PC-3 (cell line): ENCODE measurements at regions of chr6 and their contacts with region 1.

Region 1: DNA sequence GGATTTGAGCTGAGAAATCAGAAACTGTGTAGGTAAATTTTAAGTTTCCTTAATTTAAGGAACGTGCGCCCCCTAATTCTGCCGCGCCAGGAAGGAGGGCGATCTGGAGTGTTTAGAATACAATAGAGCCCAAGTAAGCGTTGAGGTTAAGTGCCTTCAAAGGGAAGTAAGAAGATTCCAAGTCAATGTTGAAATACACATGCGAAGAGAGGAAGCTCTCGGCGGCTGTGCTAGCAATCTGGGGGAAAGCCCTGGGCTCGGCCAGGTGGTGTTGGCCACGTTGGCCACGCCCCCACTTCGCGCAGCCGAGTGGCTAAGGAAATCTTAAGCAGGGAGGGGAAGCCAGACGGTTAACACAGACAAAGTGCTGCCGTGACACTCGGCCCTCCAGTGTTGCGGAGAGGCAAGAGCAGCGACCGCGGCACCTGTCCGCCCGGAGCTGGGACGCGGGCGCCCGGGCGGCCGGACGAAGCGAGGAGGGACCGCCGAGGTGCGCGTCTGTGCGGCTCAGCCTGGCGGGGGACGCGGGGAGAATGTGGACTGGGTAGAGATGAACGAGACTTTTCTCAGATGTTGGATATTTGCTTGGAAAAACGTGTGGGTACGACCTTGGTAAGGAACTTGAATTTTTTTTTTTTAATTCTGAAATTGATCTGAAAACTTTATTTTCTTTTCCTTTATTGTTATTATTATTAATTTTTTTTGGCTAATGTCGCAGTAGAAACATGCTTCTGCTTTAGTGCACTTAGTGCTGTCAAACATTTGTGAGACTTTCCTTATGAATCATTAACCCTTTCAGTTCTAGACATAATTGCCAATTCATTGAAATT is at the start of gene PRDM1:
- DNase-seq: peak; percentile 87
- ATAC-seq: peak; percentile 82
- H3K4me3 ChIP-seq: peak within 1 kb of the TSS; percentile 86
- H3K27ac ChIP-seq: peak within 1 kb of the TSS; percentile 68
- H3K4me1 ChIP-seq: peaks cover 52% of the 10 kb centered on the region
- H3K27me3 ChIP-seq: no peaks in the 10 kb centered on the region
- CTCF ChIP-seq: peak; percentile 28; the same call in 1 of the 2 replicates
- total RNA-seq, gene PRDM1: 2.0 and 2.5 TPM in 2 replicates

Region 2: DNA sequence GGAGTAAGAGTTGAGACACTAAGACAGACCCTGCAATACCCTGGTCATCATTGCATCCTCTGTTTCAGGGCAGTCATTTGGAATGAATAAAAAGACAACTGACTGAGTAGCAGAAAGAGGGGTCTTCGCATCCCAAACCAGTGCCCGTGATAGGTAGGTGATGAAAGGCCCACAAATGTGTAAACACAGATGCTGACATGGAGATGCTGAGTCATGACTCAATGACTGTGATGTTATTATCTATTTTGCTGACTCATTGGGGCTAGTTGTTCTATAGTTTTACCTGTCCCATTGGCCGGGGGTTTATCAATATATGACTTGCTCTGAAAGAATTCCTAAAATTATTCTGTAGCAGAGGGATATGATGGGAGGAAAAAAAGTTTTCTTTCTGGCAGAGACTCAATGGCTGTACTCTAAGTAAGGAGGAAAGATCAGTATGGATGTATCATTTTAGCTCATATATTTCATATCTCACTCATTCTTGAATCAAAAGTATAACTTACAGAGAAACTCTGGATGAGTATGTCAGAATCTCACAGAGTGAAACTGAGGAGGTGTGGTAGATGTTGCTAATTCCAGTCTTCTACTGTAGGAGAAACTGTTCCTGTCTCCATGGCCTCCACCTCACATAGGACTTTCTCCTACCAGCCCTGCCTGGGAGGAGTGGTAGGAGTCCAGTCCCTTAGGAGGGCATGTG is 563.4 kb before region 1 on chr6:
- CTCF ChIA-PET with region 1: no interaction called
- POLR2A ChIA-PET with region 1: no interaction called
- intact Hi-C with region 1: loop called (anchors 10 kb)
- DNase-seq: peak; percentile 66
- ATAC-seq: no peak
- H3K4me3 ChIP-seq: no peak overlapping the region
- H3K27ac ChIP-seq: peak overlapping the region; percentile 13; the same call in 1 of the 2 replicates
- H3K4me1 ChIP-seq: peaks cover 20% of the 10 kb centered on the region
- H3K27me3 ChIP-seq: no peaks in the 10 kb centered on the region
- CTCF ChIP-seq: no peak

Region 3: DNA sequence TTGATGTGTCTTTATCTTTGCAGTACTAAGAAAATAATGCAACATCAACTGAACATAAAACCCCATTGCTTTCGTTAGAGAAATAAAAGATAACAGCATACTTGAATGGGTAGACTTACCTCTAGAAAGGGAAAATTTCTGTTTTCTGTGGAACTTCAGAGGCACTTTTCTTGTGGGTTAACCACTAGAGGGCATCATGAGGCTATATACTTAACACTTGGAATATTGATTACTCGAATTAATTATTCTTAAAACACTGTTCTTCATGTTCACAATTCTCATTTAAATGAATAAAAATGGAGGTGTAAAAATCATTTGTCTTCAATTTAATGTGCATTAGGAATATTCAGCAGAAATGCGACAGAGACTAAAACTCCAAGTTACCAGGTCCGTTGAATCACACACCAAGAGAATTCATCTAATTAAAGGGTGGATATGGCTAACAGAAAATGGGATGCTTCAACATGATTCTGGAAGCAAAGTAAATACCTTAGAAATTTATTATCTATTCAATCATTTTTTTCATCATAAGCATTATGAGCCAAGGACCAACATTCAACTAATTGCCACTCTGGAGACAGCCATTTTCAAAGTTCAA is 352.5 kb before region 1 on chr6:
- CTCF ChIA-PET with region 1: no interaction called
- POLR2A ChIA-PET with region 1: no interaction called
- intact Hi-C with region 1: loop called (anchors 5 kb)
- DNase-seq: peak; percentile 55
- ATAC-seq: no peak
- H3K4me3 ChIP-seq: no peak overlapping the region
- H3K27ac ChIP-seq: no peak overlapping the region
- H3K4me1 ChIP-seq: no peaks in the 10 kb centered on the region
- H3K27me3 ChIP-seq: no peaks in the 10 kb centered on the region
- CTCF ChIP-seq: peak; percentile 78

Region 4: GRCh38 chr6:106063448-106063850 is 22.8 kb before region 1 on chr6:
- CTCF ChIA-PET with region 1: no interaction called
- POLR2A ChIA-PET with region 1: interaction called, 14 read pairs
- intact Hi-C with region 1: no loop called
- DNase-seq: peak; percentile 54
- ATAC-seq: peak; percentile 29
- H3K4me3 ChIP-seq: no peak overlapping the region
- H3K27ac ChIP-seq: 0 out of 2 replicates have a peak overlapping the region, but pooled peaks have one; percentile 23
- H3K4me1 ChIP-seq: peaks cover 18% of the 10 kb centered on the region
- H3K27me3 ChIP-seq: no peaks in the 10 kb centered on the region
- CTCF ChIP-seq: no peak

Region 5: DNA sequence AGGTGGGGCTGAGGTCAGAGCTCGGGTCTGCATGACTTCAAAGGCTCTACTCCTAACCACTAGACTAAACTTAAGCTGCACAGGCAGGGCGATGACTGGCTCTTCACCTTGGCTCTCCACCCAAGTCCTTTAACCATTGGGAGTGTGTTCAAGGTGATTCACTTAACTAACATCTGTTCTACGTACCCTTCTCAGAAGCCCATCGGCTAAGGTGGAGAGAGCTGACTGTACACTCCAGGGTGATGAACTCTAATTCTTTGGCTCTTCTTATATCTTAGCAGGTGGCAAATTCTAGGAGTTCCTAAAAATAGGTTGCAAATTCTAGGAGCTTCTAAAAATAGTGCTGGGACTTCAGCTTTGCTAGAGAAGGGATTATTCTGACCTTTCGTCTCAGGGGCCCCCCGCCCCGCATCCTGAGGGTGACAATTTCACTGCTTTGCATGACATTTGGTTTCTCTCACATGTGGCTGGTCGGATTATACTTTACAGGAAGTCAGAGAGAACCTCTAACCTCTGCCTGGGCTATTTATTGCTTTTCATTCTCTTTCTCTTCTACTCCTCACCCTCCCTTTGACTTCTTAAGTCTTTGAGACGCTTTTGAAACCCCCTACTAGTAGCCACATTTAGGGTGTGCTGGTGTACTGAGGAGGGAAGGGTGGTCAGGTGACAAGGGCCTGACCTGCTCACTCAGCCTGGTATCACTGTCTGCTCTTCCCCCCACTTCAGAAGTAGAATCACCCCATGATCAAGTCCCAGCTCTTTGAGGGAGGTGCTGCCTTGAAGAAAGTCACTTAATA is 55.4 kb after region 1 on chr6:
- CTCF ChIA-PET with region 1: no interaction called
- POLR2A ChIA-PET with region 1: no interaction called
- intact Hi-C with region 1: no loop called
- DNase-seq: peak; percentile 41
- ATAC-seq: no peak
- H3K4me3 ChIP-seq: no peak overlapping the region
- H3K27ac ChIP-seq: no peak overlapping the region
- H3K4me1 ChIP-seq: peaks cover 16% of the 10 kb centered on the region
- H3K27me3 ChIP-seq: no peaks in the 10 kb centered on the region
- CTCF ChIP-seq: no peak

Region 6: DNA sequence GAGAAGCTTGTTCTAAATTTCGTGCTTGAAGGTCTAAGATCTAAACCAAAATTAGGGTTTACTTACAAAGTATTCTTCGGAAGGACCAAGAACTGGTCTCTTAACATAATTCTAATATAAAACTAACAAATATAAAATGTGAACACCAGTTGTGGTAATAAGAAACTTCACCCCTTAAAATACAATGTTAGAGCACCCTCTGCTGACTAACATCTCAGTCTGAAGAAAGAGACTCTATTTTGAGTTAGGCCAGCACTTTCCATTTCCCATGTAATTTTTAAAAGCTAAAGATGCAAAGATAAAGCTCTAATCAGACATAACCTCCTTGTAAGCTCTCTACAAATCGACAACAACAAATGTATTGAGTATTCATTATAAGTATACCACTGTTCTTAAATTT is 214.7 kb after region 1 on chr6:
- CTCF ChIA-PET with region 1: interaction called, 3 read pairs
- POLR2A ChIA-PET with region 1: no interaction called
- intact Hi-C with region 1: loop called (anchors 2 kb)
- DNase-seq: peak; percentile 59
- ATAC-seq: no peak
- H3K4me3 ChIP-seq: no peak overlapping the region
- H3K27ac ChIP-seq: no peak overlapping the region
- H3K4me1 ChIP-seq: no peaks in the 10 kb centered on the region
- H3K27me3 ChIP-seq: no peaks in the 10 kb centered on the region
- CTCF ChIP-seq: peak; percentile 73